T-cell (primary cell): ENCODE measurements at regions of chr11 and their contacts with region 1.

Region 1: DNA sequence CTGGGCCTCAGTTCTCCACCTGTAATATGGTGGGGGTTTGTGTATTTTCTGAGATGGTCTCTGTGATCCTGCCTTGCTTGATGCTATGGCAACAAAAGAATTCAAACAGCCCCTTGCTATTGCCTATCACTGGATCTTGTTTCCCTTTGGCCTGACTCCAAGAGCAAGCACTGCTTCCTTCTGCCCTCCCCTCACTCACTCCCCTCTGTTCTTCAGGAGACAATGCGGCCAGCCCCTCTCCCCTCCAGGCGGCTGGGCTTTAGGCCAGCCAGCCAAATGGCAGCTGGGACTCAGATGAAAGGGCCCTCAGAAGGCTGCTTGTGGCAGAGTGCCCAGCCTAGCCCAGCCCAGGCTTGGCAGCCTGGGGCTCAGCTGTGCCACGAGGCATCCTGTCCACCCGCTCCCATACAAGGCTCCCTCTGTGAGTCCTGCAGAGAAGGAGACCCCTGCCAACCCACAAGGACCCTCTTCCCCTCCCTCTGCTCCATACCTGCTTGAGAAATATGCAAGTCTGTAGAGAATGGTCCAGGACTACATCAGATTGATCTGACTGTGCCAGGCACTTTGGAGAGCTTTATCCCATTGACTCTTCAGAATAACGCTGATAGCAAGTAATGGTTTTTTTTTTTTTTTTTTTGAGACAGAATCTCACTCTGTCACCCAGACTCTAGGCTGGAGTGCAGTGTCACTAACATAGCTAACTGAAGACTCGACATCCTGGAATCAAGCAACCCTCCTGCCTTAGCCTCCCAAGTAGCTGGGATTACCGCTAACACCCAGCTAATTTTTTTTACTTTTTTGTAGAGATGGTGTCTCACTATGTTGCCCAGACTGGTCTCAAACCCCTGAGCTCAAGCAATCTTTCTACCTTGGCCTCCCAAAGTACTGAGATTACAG is 7.6 kb upstream of the KCTD14 start:
- DNase-seq: no peak
- ATAC-seq: no peak
- H3K4me3 ChIP-seq: no peak overlapping the region
- H3K4me3 Mint-ChIP-seq: no peak overlapping the region
- H3K27ac ChIP-seq: no peak overlapping the region
- H3K27ac Mint-ChIP-seq: no peak overlapping the region
- H3K4me1 ChIP-seq: no peaks in the 10 kb centered on the region
- H3K4me1 Mint-ChIP-seq: no peaks in the 10 kb centered on the region
- H3K27me3 ChIP-seq: no peaks in the 10 kb centered on the region
- H3K27me3 Mint-ChIP-seq: no peaks in the 10 kb centered on the region

Region 2: DNA sequence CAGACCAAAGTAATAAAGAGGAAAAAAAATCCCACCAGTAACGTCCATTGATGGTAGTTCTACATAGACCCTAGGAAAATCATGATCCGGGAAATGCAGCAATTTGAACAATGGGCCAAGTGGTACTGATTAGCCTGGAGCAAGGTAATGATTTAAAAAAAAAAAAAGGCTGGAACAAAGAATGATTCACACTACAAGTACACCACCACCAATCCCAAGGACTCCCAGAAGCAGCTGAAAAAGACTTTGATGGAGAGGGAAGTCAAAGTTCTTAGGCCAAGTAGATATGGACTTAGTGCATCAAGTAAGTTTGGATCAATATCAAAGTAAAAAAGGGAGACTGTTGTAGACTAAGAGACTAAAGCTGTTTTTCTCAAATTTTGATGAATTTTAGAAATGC is 19.4 kb before region 1 on chr11:
- CTCF ChIA-PET with region 1: interaction called in 1 of 2 experiments, 11 read pairs
- POLR2A ChIA-PET with region 1: interaction called in 1 of 2 experiments, 6 read pairs
- DNase-seq: no peak
- ATAC-seq: no peak
- H3K4me3 ChIP-seq: no peak overlapping the region
- H3K4me3 Mint-ChIP-seq: no peak overlapping the region
- H3K27ac ChIP-seq: no peak overlapping the region
- H3K27ac Mint-ChIP-seq: no peak overlapping the region
- H3K4me1 ChIP-seq: no peaks in the 10 kb centered on the region
- H3K4me1 Mint-ChIP-seq: no peaks in the 10 kb centered on the region
- H3K27me3 ChIP-seq: peaks cover 0 to 2% of the 10 kb centered on the region in 2 experiments
- H3K27me3 Mint-ChIP-seq: peaks cover 3% of the 10 kb centered on the region in 2 donors

Region 3: DNA sequence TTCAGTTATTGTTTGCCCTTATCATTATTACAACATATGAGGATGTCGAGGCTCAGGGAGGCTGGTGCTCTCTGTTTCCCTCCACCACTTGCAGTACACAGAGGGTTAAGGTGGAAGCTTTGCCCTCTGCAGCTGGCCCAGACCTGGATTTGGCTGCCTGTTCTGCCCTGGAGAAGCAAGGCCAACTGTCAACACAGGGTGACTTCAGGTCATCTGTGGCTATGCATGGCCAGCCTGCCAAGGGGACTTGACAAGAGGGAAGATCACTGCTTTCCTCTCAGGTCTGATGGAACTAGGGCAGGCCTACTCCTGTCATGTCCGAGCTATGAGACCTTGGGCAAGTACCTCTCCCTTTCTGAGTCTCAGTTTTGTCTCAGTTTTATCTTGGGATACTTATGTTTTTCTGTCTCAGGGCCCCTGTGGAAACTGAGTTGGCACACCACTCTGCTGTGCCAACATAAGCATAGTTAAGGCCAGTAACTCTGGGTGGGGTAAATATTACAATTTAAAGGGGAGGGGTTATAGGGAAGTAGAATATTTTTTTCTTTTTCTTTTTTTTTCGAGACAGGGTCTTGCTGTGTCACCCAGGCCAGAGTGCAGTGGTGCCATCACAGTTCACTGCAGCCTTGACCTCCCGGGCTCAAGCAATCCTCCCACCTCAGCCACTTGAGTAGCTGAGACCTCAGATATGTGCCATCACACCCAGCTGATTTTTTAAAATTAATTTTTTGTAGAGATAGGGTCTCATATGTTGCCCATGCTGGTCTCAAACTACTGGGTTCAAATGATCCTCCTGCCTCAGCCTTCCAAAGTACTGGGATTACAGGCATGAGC is 30.6 kb after region 1 on chr11:
- CTCF ChIA-PET with region 1: no interaction called
- POLR2A ChIA-PET with region 1: no interaction called
- DNase-seq: no peak
- ATAC-seq: no peak
- H3K4me3 ChIP-seq: no peak overlapping the region
- H3K4me3 Mint-ChIP-seq: no peak overlapping the region
- H3K27ac ChIP-seq: no peak overlapping the region
- H3K27ac Mint-ChIP-seq: no peak overlapping the region
- H3K4me1 ChIP-seq: no peaks in the 10 kb centered on the region
- H3K4me1 Mint-ChIP-seq: no peaks in the 10 kb centered on the region
- H3K27me3 ChIP-seq: no peaks in the 10 kb centered on the region
- H3K27me3 Mint-ChIP-seq: no peaks in the 10 kb centered on the region